ENCODE measurements at regions of chr15 and their contacts with region 1.

Region 1: GRCh38 chr15:90233376-90234095 is at the start of gene CIB1:
- DNase-seq: peak; percentile 98
- H3K4me3 Mint-ChIP-seq: peak within 1 kb of the TSS; percentile 97
- H3K27ac Mint-ChIP-seq: peak within 1 kb of the TSS; percentile 92
- H3K4me1 Mint-ChIP-seq: peaks cover 65% of the 10 kb centered on the region
- H3K27me3 Mint-ChIP-seq: no peaks in the 10 kb centered on the region
- total RNA-seq, gene CIB1: 118 to 120 TPM

Region 2: GRCh38 chr15:90071208-90071807 is 162.2 kb before region 1 on chr15:
- CTCF ChIA-PET with region 1: no interaction called
- POLR2A ChIA-PET with region 1: no interaction called
- DNase-seq: peak; percentile 83
- H3K4me3 Mint-ChIP-seq: no peak overlapping the region
- H3K27ac Mint-ChIP-seq: no peak overlapping the region
- H3K4me1 Mint-ChIP-seq: peaks cover 10% of the 10 kb centered on the region
- H3K27me3 Mint-ChIP-seq: no peaks in the 10 kb centered on the region

Region 3: DNA sequence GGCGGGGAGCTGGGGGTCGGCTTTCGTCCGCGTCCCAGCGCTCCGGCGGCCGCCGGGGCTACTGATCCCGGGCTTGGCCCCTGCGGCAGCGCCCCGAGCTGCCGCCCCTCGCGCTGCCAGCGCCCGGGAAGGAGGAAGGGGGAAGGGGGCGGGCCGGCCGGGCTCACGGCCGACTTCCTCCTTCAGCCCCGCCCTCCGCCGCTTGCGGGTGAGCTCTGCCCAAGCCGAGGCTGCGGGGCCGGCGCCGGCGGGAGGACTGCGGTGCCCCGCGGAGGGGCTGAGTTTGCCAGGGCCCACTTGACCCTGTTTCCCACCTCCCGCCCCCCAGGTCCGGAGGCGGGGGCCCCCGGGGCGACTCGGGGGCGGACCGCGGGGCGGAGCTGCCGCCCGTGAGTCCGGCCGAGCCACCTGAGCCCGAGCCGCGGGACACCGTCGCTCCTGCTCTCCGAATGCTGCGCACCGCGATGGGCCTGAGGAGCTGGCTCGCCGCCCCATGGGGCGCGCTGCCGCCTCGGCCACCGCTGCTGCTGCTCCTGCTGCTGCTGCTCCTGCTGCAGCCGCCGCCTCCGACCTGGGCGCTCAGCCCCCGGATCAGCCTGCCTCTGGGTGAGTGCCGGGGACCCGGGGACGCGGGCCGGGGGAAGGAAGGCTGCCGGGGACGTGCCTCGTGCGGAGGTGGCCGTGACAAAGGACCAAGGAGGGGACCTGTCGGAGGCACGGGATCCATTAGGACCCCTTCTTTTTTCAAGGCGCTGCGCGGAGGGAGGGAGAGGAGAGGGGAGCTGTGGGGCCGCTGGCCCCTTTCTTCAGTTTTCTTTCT is 32.2 kb before region 1 on chr15 and contains the start of gene SEMA4B:
- CTCF ChIA-PET with region 1: interaction called, 8 read pairs
- POLR2A ChIA-PET with region 1: interaction called, 41 read pairs
- DNase-seq: peak; percentile 80
- H3K4me3 Mint-ChIP-seq: peak within 1 kb of the TSS; percentile 81
- H3K27ac Mint-ChIP-seq: peak within 1 kb of the TSS; percentile 59
- H3K4me1 Mint-ChIP-seq: peaks cover 29% of the 10 kb centered on the region
- H3K27me3 Mint-ChIP-seq: peaks cover 3% of the 10 kb centered on the region
- total RNA-seq, gene SEMA4B: 29.7 to 29.9 TPM

Region 4: DNA sequence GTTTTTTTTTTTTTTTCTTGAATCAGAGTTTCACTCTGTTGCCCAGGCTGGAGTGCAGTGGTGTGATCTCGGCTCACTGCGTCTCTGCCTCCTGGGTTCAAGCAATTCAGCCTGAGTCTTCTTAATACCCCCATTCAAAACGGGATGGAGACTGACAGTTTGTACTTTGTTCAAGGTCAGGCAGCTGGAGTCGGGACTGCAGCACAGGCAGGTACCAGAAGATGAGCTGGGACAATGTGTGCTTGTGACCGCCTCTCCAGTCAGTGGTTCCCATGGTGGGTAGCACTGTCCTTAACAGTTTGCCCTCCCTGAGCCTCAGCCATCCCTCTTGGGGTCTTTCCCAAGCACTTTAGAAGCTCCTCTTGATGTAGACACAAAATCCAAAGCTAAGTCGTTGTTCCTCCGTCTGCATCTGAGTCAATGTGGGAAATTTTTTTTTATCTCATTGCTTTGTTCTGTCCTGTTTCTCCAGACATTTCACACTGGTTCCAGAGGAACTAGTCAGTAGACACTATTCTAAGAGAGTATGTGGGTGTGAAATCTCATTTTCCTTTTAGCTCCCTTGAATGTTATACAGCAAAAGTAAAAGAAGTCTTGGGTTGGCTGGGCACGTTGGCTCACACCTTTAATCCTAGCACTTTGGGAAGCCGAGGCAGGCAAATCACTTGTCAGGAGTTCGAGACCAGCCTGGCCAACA is 10.6 kb after region 1 on chr15:
- CTCF ChIA-PET with region 1: no interaction called
- POLR2A ChIA-PET with region 1: interaction called, 38 read pairs
- DNase-seq: no peak
- H3K4me3 Mint-ChIP-seq: no peak overlapping the region
- H3K27ac Mint-ChIP-seq: no peak overlapping the region
- H3K4me1 Mint-ChIP-seq: peaks cover 11% of the 10 kb centered on the region
- H3K27me3 Mint-ChIP-seq: no peaks in the 10 kb centered on the region

Region 5: GRCh38 chr15:90259524-90259923 is 26.0 kb after region 1 on chr15:
- CTCF ChIA-PET with region 1: no interaction called
- POLR2A ChIA-PET with region 1: interaction called, 27 read pairs
- DNase-seq: no peak
- H3K4me3 Mint-ChIP-seq: no peak overlapping the region
- H3K27ac Mint-ChIP-seq: peak overlapping the region; percentile 66
- H3K4me1 Mint-ChIP-seq: peaks cover 43% of the 10 kb centered on the region
- H3K27me3 Mint-ChIP-seq: no peaks in the 10 kb centered on the region

Region 6: GRCh38 chr15:90286678-90287077 is 53.1 kb after region 1 on chr15:
- CTCF ChIA-PET with region 1: interaction called, 12 read pairs
- POLR2A ChIA-PET with region 1: interaction called, 3 read pairs
- DNase-seq: peak; percentile 43
- H3K4me3 Mint-ChIP-seq: no peak overlapping the region
- H3K27ac Mint-ChIP-seq: no peak overlapping the region
- H3K4me1 Mint-ChIP-seq: peaks cover 4% of the 10 kb centered on the region
- H3K27me3 Mint-ChIP-seq: no peaks in the 10 kb centered on the region

Measured in activated CD4-positive, alpha-beta memory T cell treated with anti-CD3 and anti-CD28 coated beads, Interleukin-2, amount 10 ng/mL, durations not matched to agents 7 days and 5 days (primary cell).